CD8-positive, alpha-beta T cell (primary cell): ENCODE measurements at regions of chr14 and their contacts with region 1.

Region 1: GRCh38 chr14:93939304-93940229 is 12.4 kb downstream of the FAM181A start:
- DNase-seq: peak; percentile 85 to 98 (median 90)
- ATAC-seq: peak; percentile 87
- H3K4me3 ChIP-seq: peak overlapping the region; percentile 29 to 33
- H3K4me3 Mint-ChIP-seq: peak overlapping the region; percentile 70
- H3K27ac ChIP-seq: no peak overlapping the region
- H3K27ac Mint-ChIP-seq: no peak overlapping the region
- H3K4me1 ChIP-seq: peaks cover 10% of the 10 kb centered on the region
- H3K4me1 Mint-ChIP-seq: peaks cover 6% of the 10 kb centered on the region
- H3K27me3 ChIP-seq: no peaks in the 10 kb centered on the region
- H3K27me3 Mint-ChIP-seq: peaks cover 10% of the 10 kb centered on the region
- CTCF ChIP-seq: peak; percentile 99

Region 2: GRCh38 chr14:93953263-93953662 is 13.7 kb after region 1 on chr14:
- CTCF ChIA-PET with region 1: interaction called, 87 read pairs
- POLR2A ChIA-PET with region 1: interaction called, 3 read pairs
- intact Hi-C with region 1: no loop called
- DNase-seq: peak in 2 of 9 experiments; percentile 26 to 33
- ATAC-seq: no peak
- H3K4me3 ChIP-seq: no peak overlapping the region
- H3K4me3 Mint-ChIP-seq: peak overlapping the region; percentile 78
- H3K27ac ChIP-seq: no peak overlapping the region
- H3K27ac Mint-ChIP-seq: peak overlapping the region; percentile 76
- H3K4me1 ChIP-seq: peaks cover 49% of the 10 kb centered on the region
- H3K4me1 Mint-ChIP-seq: peaks cover 53% of the 10 kb centered on the region
- H3K27me3 ChIP-seq: no peaks in the 10 kb centered on the region
- H3K27me3 Mint-ChIP-seq: no peaks in the 10 kb centered on the region
- CTCF ChIP-seq: no peak

Region 3: DNA sequence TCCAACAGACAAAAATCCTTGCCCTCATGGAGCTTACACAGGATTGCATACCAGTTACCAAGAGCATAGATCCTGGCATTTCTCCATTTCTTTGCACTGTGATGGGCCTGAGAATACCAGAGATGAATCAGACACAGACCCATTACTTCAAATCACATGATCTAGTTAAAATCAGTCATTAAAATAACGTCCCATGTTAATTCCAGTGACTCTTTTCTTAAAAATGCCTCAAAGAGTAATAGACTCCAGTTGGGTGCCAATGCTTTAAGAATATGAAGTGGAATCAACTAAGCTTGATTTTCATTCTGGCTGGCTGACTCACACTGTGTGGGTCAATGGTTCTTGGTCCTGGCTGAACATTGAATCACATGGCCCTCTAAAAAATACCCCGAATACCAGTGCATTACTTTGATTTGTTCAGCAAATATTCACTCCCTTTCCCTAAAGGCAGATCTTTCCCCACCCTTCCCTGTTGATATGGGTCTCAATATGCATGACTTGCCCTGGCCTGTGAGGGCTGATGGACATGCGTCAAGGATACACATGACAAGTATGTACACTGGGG is 25.8 kb after region 1 on chr14:
- CTCF ChIA-PET with region 1: interaction called, 504 read pairs
- POLR2A ChIA-PET with region 1: interaction called, 40 read pairs
- intact Hi-C with region 1: loop called (anchors 1 kb)
- DNase-seq: no peak
- ATAC-seq: no peak
- H3K4me3 ChIP-seq: no peak overlapping the region
- H3K4me3 Mint-ChIP-seq: no peak overlapping the region
- H3K27ac ChIP-seq: no peak overlapping the region
- H3K27ac Mint-ChIP-seq: peak overlapping the region; percentile 12
- H3K4me1 ChIP-seq: peaks cover 39% of the 10 kb centered on the region
- H3K4me1 Mint-ChIP-seq: peaks cover 57% of the 10 kb centered on the region
- H3K27me3 ChIP-seq: no peaks in the 10 kb centered on the region
- H3K27me3 Mint-ChIP-seq: no peaks in the 10 kb centered on the region
- CTCF ChIP-seq: no peak

Region 4: DNA sequence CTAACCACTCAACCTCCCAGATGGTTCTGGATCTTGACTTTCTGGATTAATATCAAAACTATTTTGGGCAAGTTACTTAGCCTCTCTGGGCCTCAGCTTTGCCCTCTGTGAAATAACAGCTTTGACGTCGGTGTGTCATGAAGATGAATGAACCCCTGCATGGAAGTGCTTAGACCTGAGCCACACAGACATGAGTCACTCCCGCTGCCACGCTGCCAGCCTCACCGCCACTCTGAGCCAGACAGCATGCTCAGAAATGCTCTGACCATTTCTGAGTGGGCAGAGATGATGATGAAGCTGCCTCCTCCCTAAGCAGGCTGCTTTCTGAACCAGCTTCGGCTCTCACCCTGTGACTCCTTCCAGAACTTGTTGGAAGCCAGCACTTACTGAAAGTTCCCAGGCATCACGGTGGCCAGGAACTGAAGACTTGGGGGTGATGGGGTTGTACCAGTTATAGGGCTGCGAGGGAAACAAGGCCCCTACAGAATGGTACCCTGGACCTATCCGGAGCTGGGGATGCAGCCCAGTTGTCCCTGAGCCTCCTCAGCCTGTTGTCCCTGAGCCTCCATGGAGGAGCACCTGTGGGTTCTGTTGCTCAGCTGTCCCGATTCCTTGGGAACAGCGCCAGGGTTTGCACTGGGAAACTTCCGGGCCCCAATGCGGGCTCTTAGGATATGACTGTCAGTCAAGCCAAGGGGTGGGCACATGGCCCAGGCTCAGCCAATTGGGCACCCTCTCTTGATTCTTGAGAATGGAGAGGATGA is 55.5 kb after region 1 on chr14:
- CTCF ChIA-PET with region 1: interaction called, 283 read pairs
- POLR2A ChIA-PET with region 1: interaction called, 3 read pairs
- intact Hi-C with region 1: no loop called
- DNase-seq: peak in 1 of 9 experiments; percentile 40
- ATAC-seq: peak; percentile 49
- H3K4me3 ChIP-seq: no peak overlapping the region
- H3K4me3 Mint-ChIP-seq: no peak overlapping the region
- H3K27ac ChIP-seq: no peak overlapping the region
- H3K27ac Mint-ChIP-seq: no peak overlapping the region
- H3K4me1 ChIP-seq: no peaks in the 10 kb centered on the region
- H3K4me1 Mint-ChIP-seq: no peaks in the 10 kb centered on the region
- H3K27me3 ChIP-seq: no peaks in the 10 kb centered on the region
- H3K27me3 Mint-ChIP-seq: peaks cover 2% of the 10 kb centered on the region
- CTCF ChIP-seq: no peak

Region 5: GRCh38 chr14:94009767-94010166 is 70.2 kb after region 1 on chr14:
- CTCF ChIA-PET with region 1: interaction called, 283 read pairs
- POLR2A ChIA-PET with region 1: interaction called, 3 read pairs
- intact Hi-C with region 1: no loop called
- DNase-seq: no peak
- ATAC-seq: no peak
- H3K4me3 ChIP-seq: no peak overlapping the region
- H3K4me3 Mint-ChIP-seq: no peak overlapping the region
- H3K27ac ChIP-seq: no peak overlapping the region
- H3K27ac Mint-ChIP-seq: no peak overlapping the region
- H3K4me1 ChIP-seq: peaks cover 19% of the 10 kb centered on the region
- H3K4me1 Mint-ChIP-seq: peaks cover 36% of the 10 kb centered on the region
- H3K27me3 ChIP-seq: peaks cover 0 to 12% of the 10 kb centered on the region in 2 experiments
- H3K27me3 Mint-ChIP-seq: peaks cover 13% of the 10 kb centered on the region
- CTCF ChIP-seq: no peak

Region 6: DNA sequence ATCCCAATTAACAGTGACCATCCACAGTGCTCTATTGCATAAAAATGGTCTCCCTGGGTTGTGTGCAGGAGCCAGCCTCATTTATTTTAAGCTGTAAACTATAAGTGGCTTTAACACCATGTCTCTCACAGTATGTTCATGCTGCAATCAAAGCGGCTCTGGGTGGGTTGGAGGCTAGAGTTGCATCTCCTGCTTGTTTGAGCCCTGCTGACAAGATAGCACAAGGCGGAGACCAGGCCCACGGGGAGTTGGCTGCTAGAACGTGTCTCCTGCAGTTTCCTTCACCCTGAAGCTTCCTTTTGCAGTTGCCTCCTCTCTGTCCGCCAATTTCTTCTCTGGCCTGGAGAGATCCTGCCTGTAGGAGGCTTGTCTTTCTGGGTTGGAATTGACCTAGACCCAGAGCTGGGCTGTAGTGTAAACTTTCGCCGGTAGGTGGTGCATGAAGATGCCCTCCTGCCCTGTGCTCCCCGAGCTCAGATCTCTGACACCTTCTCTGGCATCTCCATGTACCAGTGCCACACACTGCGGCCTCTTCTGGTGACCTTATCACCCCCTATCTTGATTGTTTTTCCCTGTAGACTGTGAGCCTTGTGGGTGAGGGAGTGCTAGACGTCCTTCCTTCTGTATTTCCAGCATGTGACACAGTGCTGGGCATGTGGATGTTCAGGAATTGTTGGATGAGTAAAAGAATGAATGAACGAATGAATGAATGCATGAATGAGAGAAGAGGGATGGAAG is 96.9 kb after region 1 on chr14:
- CTCF ChIA-PET with region 1: interaction called, 15 read pairs
- POLR2A ChIA-PET with region 1: no interaction called
- intact Hi-C with region 1: no loop called
- DNase-seq: peak; percentile 52 to 84 (median 78)
- ATAC-seq: peak; percentile 99
- H3K4me3 ChIP-seq: no peak overlapping the region
- H3K4me3 Mint-ChIP-seq: no peak overlapping the region
- H3K27ac ChIP-seq: no peak overlapping the region
- H3K27ac Mint-ChIP-seq: no peak overlapping the region
- H3K4me1 ChIP-seq: no peaks in the 10 kb centered on the region
- H3K4me1 Mint-ChIP-seq: peaks cover 3% of the 10 kb centered on the region
- H3K27me3 ChIP-seq: no peaks in the 10 kb centered on the region
- H3K27me3 Mint-ChIP-seq: no peaks in the 10 kb centered on the region
- CTCF ChIP-seq: peak; percentile 82

Region 7: GRCh38 chr14:94136575-94137331 is 197.2 kb after region 1 on chr14:
- CTCF ChIA-PET with region 1: interaction called, 23 read pairs
- POLR2A ChIA-PET with region 1: no interaction called
- intact Hi-C with region 1: loop called (anchors 1 kb)
- DNase-seq: peak; percentile 74 to 90 (median 85)
- ATAC-seq: peak; percentile 97
- H3K4me3 ChIP-seq: no peak overlapping the region
- H3K4me3 Mint-ChIP-seq: no peak overlapping the region
- H3K27ac ChIP-seq: no peak overlapping the region
- H3K27ac Mint-ChIP-seq: no peak overlapping the region
- H3K4me1 ChIP-seq: no peaks in the 10 kb centered on the region
- H3K4me1 Mint-ChIP-seq: no peaks in the 10 kb centered on the region
- H3K27me3 ChIP-seq: no peaks in the 10 kb centered on the region
- H3K27me3 Mint-ChIP-seq: peaks cover 5% of the 10 kb centered on the region
- CTCF ChIP-seq: peak; percentile 97

Region 8: DNA sequence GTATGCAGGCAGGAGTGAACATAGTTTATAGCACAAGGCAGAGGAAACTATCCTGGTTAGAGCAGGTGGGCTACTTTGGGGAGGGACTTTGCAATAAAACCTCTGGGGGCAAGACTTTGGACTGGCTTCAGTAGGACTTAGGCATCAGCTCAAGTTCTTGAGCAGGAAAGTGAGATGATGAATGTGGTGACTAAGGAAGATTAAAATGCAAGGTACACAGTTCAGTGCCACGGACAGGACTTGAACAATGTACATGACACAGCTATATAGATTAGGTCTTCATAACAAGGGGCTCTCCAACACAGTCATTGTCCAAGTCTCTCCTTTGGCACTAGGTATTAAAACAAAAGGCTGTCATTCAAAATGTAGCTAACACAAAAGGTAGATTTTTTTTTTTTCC is 213.1 kb after region 1 on chr14:
- CTCF ChIA-PET with region 1: no interaction called
- POLR2A ChIA-PET with region 1: no interaction called
- intact Hi-C with region 1: no loop called
- DNase-seq: no peak
- ATAC-seq: no peak
- H3K4me3 ChIP-seq: no peak overlapping the region
- H3K4me3 Mint-ChIP-seq: no peak overlapping the region
- H3K27ac ChIP-seq: no peak overlapping the region
- H3K27ac Mint-ChIP-seq: no peak overlapping the region
- H3K4me1 ChIP-seq: peaks cover 3% of the 10 kb centered on the region
- H3K4me1 Mint-ChIP-seq: peaks cover 2% of the 10 kb centered on the region
- H3K27me3 ChIP-seq: peaks cover 0 to 3% of the 10 kb centered on the region in 2 experiments
- H3K27me3 Mint-ChIP-seq: peaks cover 26% of the 10 kb centered on the region
- CTCF ChIP-seq: no peak